Heart right ventricle (tissue), 16 donors: ENCODE measurements at regions of chr5 and their contacts with region 1.

Region 1: GRCh38 chr5:112560371-112560770 is 141.3 kb upstream of the EPB41L4A start:
- DNase-seq: no peak
- ATAC-seq: no peak
- H3K4me3 ChIP-seq: no peak overlapping the region
- H3K27ac ChIP-seq: no peak overlapping the region
- H3K4me1 ChIP-seq: peaks cover 0 to 4% (median 0%) of the 10 kb centered on the region in 9 donors
- H3K27me3 ChIP-seq: no peaks in the 10 kb centered on the region
- CTCF ChIP-seq: no peak

Region 2: GRCh38 chr5:112604732-112605630 is 44.6 kb after region 1 on chr5:
- intact Hi-C with region 1: loop called in 1 of 10 experiments (anchors 5 kb)
- DNase-seq: no peak
- ATAC-seq: peak in 4 of 8 donors; percentile 42 to 55 (median 48)
- H3K4me3 ChIP-seq: no peak overlapping the region
- H3K27ac ChIP-seq: no peak overlapping the region
- H3K4me1 ChIP-seq: no peaks in the 10 kb centered on the region
- H3K27me3 ChIP-seq: no peaks in the 10 kb centered on the region
- CTCF ChIP-seq: peak in 7 of 9 donors; percentile 18 to 53 (median 37)

Region 3: DNA sequence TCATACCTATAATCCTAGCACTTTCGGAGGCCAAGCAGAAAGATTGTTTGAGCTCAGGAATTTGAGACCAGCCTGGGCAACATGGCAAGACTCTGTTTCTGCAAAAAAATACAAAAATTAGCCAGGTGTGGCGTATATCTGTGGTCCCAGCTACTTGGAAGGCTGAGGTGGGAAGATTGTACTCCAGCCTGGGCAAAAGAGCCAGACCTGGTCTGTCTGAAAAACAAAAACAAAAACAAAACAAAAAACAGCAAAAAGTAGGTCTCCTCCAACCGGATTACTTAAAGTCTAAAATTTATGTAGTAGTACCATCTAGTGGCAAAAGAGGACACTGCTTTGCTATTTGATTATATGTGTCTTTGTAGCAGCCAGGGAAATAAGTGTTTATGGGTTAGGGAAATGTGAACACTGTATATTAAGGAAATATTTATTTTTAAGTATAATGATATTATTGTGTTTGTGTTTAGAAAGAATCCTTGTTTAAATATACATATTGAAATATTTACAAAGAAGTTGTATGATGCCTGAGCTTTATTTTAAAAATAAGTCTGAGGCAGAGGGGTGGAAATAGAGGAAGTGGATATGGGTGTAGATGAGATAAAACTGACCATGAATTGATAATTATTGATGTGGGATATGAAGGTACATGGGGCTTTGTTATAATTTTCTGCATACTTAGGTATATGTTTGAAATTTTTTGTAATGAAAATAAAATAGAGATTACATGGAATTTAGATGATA is 197.3 kb after region 1 on chr5:
- intact Hi-C with region 1: no loop called
- DNase-seq: no peak
- ATAC-seq: peak in 7 of 8 donors; percentile 69 to 86 (median 78)
- H3K4me3 ChIP-seq: no peak overlapping the region
- H3K27ac ChIP-seq: peak overlapping the region in 1 of 10 donors; percentile 58
- H3K4me1 ChIP-seq: peaks cover 0 to 14% (median 6%) of the 10 kb centered on the region in 9 donors
- H3K27me3 ChIP-seq: no peaks in the 10 kb centered on the region
- CTCF ChIP-seq: peak; percentile 70 to 90 (median 80)